ENCODE measurements at regions of chr5 and their contacts with region 1.

Region 1: DNA sequence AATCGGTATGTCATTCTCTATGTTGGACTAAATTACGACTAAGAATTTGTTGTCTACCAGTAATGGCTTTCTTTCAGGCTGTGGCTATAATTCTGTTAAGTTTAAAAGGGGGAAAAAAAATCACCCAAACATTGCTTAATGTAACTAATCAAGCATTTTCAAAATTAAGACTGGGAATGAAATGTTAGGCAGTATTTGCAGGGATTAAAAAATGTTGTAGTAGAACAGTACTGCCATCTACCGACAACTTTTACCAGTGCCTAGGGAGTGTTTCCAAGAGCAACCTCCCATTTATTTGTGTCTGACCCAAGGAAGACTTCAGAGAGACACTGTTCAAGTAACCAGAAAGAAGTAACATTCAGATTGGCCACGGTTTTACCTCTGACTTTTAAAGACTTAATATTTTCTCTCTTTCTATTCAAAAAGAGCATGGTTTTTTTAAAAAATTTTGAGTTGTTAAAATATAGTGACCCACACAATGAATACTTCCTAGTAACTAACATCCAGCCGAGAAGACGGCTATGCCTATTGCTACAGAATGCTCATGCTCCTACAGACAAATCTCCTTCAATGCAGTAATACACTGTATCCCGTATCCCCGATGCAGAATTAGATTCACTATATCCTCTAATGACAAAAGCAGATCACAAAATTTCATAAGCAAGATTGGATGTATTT is 92.4 kb downstream of the ARL15 start:
- DNase-seq: peak; percentile 27
- H3K4me3 Mint-ChIP-seq: no peak overlapping the region
- H3K27ac Mint-ChIP-seq: no peak overlapping the region
- H3K4me1 Mint-ChIP-seq: peaks cover 8% of the 10 kb centered on the region
- H3K27me3 Mint-ChIP-seq: no peaks in the 10 kb centered on the region

Region 2: GRCh38 chr5:53123702-53124101 is 1094.3 kb before region 1 on chr5:
- CTCF ChIA-PET with region 1: no interaction called
- intact Hi-C with region 1: loop called (anchors 5 kb)
- DNase-seq: no peak
- H3K4me3 Mint-ChIP-seq: no peak overlapping the region
- H3K27ac Mint-ChIP-seq: no peak overlapping the region
- H3K4me1 Mint-ChIP-seq: no peaks in the 10 kb centered on the region
- H3K27me3 Mint-ChIP-seq: no peaks in the 10 kb centered on the region

Region 3: DNA sequence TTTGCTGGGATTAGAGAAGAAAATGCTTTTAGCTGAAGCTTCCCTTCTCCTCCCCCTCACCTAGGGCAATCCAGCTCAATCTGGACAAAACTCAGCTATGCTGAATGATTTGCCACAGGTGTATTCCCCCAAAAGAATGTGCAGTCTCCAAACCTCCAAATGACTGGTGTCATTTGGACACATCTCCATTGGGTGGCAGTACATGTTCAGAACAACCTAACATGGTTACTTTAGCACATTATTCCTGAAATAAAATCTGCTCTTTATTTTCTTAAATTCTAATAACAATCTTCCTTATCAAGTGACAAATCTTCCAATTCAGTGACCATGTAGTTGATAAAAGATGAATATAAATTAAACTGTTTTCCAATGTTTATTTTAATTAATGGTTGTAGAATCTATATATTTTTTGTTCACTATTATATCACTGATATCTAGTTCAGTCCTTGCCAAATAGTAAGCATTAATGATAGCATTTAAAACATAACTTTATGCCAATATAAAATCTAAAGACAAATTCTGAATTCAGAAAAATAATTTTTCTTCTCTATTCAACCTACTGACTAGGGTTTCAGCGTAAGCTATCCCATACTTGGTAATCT is 1047.1 kb before region 1 on chr5:
- CTCF ChIA-PET with region 1: interaction called, 3 read pairs
- intact Hi-C with region 1: loop called (anchors 2 kb)
- DNase-seq: peak; percentile 25
- H3K4me3 Mint-ChIP-seq: no peak overlapping the region
- H3K27ac Mint-ChIP-seq: no peak overlapping the region
- H3K4me1 Mint-ChIP-seq: no peaks in the 10 kb centered on the region
- H3K27me3 Mint-ChIP-seq: peaks cover 3% of the 10 kb centered on the region

Region 4: DNA sequence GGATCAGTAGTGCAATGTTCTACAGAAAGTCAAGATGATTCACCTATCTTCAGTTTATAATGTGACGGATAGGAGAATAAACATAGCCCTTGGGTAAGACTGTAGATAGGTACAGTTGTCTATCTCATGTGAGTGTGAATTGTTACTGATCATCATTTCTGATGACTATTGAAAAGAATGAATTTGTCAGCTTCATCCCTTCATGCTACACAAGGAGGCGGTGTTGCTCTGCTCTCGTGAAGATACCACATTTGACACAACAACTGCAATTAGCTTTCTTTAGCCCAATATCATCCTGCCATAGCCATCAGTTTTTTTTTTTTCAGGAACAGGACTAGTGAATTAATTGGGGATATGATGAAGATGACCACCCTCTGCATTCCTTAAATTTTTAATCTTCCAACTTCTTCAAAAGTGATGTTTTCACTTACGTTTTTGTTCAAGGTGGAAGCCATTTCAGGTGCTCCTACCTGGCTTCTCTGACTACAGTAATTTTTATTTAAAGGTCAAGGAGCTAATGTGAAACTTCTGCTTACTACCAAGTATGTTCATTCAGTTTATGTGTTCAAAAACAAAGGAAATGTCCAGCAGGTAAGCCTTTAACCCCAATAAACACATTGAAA is 955.5 kb before region 1 on chr5:
- CTCF ChIA-PET with region 1: no interaction called
- intact Hi-C with region 1: loop called (anchors 5 kb)
- DNase-seq: peak; percentile 25
- H3K4me3 Mint-ChIP-seq: no peak overlapping the region
- H3K27ac Mint-ChIP-seq: no peak overlapping the region
- H3K4me1 Mint-ChIP-seq: no peaks in the 10 kb centered on the region
- H3K27me3 Mint-ChIP-seq: peaks cover 10% of the 10 kb centered on the region

Region 5: GRCh38 chr5:53425598-53426511 is 792.1 kb before region 1 on chr5:
- CTCF ChIA-PET with region 1: no interaction called
- intact Hi-C with region 1: loop called (anchors 2 kb)
- DNase-seq: peak; percentile 59
- H3K4me3 Mint-ChIP-seq: no peak overlapping the region
- H3K27ac Mint-ChIP-seq: no peak overlapping the region
- H3K4me1 Mint-ChIP-seq: no peaks in the 10 kb centered on the region
- H3K27me3 Mint-ChIP-seq: peaks cover 20% of the 10 kb centered on the region

Region 6: DNA sequence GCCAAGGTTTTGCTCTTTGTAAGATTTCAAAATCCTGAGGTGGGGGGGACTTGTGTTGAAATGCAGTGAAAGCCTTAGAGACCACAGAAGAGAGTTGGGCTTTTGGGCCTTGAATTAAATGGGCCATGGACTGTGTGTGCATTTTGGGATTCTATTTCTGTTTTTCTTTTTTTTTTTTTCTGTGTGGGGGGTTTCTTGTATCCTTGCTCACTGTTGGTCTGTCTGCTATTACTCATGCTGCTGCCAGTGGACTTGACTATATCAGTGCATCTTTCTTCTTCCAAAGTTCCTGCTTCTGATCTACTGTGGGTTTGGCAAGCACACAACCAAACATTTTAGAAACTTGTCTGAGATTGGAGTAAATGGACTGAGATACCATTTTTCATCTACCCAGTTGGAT is 252.5 kb before region 1 on chr5:
- CTCF ChIA-PET with region 1: no interaction called
- intact Hi-C with region 1: loop called (anchors 10 kb)
- DNase-seq: no peak
- H3K4me3 Mint-ChIP-seq: no peak overlapping the region
- H3K27ac Mint-ChIP-seq: no peak overlapping the region
- H3K4me1 Mint-ChIP-seq: no peaks in the 10 kb centered on the region
- H3K27me3 Mint-ChIP-seq: no peaks in the 10 kb centered on the region

Region 7: DNA sequence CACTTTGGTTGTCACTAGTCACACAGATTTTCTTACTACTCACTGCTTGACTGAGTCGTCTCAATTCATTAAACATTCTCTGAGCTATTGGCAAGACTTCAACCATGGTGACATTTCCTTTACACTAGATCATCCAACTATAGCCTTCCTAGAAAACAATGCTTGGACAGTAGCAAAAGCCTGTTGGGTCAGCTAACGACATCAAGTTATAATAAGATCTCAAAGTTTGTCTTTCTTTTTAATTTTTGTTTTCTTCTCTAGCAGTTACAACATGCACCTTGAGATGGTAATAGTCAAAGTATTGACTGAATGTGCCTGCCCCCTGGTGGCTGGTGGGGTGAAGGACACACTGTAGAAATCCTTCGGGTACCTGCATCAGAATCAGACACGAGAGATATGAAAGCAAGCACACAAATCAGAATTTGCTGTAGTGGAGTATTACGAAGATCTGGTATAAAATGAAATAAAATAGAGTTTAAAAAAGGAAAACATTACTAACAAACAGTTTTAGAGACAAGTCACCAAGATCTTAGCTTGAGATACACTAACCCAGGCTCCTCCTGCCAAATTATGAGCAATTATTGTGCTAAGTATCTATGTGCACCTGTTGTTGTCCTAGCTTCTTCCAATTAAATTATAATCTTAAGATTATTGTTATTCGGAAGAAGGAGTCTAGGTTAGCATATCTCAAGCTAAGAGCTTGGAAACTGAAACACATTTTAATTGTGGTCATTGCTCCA is 11.2 kb after region 1 on chr5:
- CTCF ChIA-PET with region 1: interaction called, 20 read pairs
- intact Hi-C with region 1: loop called (anchors 1 kb)
- DNase-seq: peak; percentile 87
- H3K4me3 Mint-ChIP-seq: no peak overlapping the region
- H3K27ac Mint-ChIP-seq: no peak overlapping the region
- H3K4me1 Mint-ChIP-seq: peaks cover 2% of the 10 kb centered on the region
- H3K27me3 Mint-ChIP-seq: no peaks in the 10 kb centered on the region

Measured in activated naive CD4-positive, alpha-beta T cell treated with anti-CD3 and anti-CD28 coated beads for 36 hours (primary cell).